ENCODE measurements at regions of chr3 and their contacts with region 1.

Region 1: DNA sequence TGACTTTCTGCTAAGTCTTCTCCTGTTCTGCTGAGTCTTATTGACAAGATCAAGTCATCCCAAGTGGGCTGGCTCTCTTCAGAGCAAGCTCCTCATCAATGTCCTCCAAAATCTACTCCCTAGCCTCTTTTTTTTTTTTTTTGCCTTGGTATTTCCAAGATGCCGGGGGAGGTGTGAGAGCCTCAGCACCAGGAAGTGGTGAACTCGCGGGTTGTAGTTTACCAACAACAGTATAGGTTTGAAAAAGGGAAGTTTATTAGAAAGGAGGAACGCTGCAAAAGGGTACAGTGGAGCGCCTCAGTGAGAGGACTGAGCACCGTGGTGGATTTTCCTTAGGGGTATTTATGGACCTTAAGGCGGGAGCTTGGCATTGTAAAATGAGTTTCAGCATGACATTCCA is 94.3 kb upstream of the SGO1 start:
- DNase-seq: no peak
- H3K4me3 ChIP-seq: no peak overlapping the region
- H3K4me3 Mint-ChIP-seq: peak overlapping the region in 6 of 8 donors; percentile 21 to 72 (median 49)
- H3K27ac ChIP-seq: no peak overlapping the region
- H3K27ac Mint-ChIP-seq: peak overlapping the region in 2 of 7 donors; percentile 13 to 42
- H3K4me1 ChIP-seq: peaks cover 10% of the 10 kb centered on the region
- H3K4me1 Mint-ChIP-seq: peaks cover 7 to 13% (median 9%) of the 10 kb centered on the region in 4 donors
- H3K27me3 ChIP-seq: no peaks in the 10 kb centered on the region
- H3K27me3 Mint-ChIP-seq: no peaks in the 10 kb centered on the region

Region 2: GRCh38 chr3:20264934-20265567 is 15.2 kb before region 1 on chr3:
- CTCF ChIA-PET with region 1: no interaction called
- POLR2A ChIA-PET with region 1: no interaction called
- intact Hi-C with region 1: loop called (anchors 1 kb)
- DNase-seq: no peak
- H3K4me3 ChIP-seq: no peak overlapping the region
- H3K4me3 Mint-ChIP-seq: no peak overlapping the region
- H3K27ac ChIP-seq: no peak overlapping the region
- H3K27ac Mint-ChIP-seq: peak overlapping the region in 1 of 7 donors; percentile 49
- H3K4me1 ChIP-seq: no peaks in the 10 kb centered on the region
- H3K4me1 Mint-ChIP-seq: no peaks in the 10 kb centered on the region
- H3K27me3 ChIP-seq: no peaks in the 10 kb centered on the region
- H3K27me3 Mint-ChIP-seq: peaks cover 1 to 2% of the 10 kb centered on the region in 2 donors

Region 3: GRCh38 chr3:20340324-20340928 is 60.2 kb after region 1 on chr3:
- CTCF ChIA-PET with region 1: no interaction called
- POLR2A ChIA-PET with region 1: no interaction called
- intact Hi-C with region 1: no loop called
- DNase-seq: peak; percentile 43 to 60 (median 50)
- H3K4me3 ChIP-seq: no peak overlapping the region
- H3K4me3 Mint-ChIP-seq: no peak overlapping the region
- H3K27ac ChIP-seq: no peak overlapping the region
- H3K27ac Mint-ChIP-seq: no peak overlapping the region
- H3K4me1 ChIP-seq: no peaks in the 10 kb centered on the region
- H3K4me1 Mint-ChIP-seq: peaks cover 0 to 3% (median under 1%) of the 10 kb centered on the region in 4 donors
- H3K27me3 ChIP-seq: no peaks in the 10 kb centered on the region
- H3K27me3 Mint-ChIP-seq: no peaks in the 10 kb centered on the region